CD4-positive, alpha-beta T cell (primary cell): ENCODE measurements at regions of chr3 and their contacts with region 1.

Region 1: DNA sequence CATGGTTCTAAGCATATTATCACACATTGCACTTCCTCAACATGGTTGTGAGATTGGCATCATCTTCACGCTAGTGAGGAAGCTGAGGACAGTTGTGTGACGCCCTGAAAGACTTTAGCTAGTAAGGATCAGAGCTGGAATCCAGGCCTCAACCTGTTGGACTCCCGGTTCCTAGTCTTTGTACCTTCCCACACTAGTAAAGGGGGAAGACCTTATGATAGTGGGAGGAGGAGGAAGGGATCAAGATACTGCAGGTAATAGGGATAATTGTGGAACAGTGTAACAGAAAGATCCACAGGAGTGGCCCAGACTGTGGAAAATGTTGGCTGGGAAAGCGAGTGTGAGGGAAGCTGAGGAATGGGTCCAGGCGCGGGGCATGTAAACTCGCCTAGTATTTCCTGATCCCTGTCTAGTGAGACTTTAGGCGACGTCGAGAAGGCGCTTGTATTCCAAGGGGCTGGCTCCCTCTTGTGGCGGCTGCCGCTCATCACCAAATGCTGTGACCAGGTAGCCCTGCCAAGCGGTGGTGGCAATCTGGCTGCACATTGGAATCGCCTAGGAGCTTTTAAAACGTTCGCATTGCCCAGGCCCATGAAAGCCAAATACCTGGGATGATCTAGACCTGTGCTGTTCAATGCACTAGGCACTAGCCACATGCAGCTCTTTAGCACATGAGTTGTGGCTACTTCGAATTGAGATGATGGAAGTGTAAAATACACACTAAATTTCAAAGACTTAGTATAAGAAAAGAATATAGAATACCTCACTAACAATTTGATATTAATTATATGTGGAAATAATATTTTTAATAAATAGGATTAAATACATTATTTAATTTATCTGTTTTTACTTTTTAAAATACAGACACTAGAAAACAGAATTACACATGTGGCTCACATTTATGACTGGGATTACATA is 38.8 kb upstream of the CLDN18 start:
- DNase-seq: peak in 13 of 14 experiments; percentile 14 to 55 (median 29)
- ATAC-seq: no peak
- H3K4me3 ChIP-seq: no peak overlapping the region
- H3K4me3 Mint-ChIP-seq: no peak overlapping the region
- H3K27ac ChIP-seq: no peak overlapping the region
- H3K27ac Mint-ChIP-seq: no peak overlapping the region
- H3K4me1 ChIP-seq: no peaks in the 10 kb centered on the region
- H3K4me1 Mint-ChIP-seq: no peaks in the 10 kb centered on the region
- H3K27me3 ChIP-seq: peaks cover 0 to 10% of the 10 kb centered on the region in 2 experiments
- H3K27me3 Mint-ChIP-seq: peaks cover 15% of the 10 kb centered on the region
- CTCF ChIP-seq: peak; percentile 65

Region 2: GRCh38 chr3:137105277-137105977 is 865.7 kb before region 1 on chr3:
- CTCF ChIA-PET with region 1: no interaction called
- POLR2A ChIA-PET with region 1: no interaction called
- intact Hi-C with region 1: loop called in 1 of 2 experiments (anchors 1 kb)
- DNase-seq: peak in 4 of 14 experiments; percentile 2 to 61 (median 48)
- ATAC-seq: no peak
- H3K4me3 ChIP-seq: no peak overlapping the region
- H3K4me3 Mint-ChIP-seq: no peak overlapping the region
- H3K27ac ChIP-seq: no peak overlapping the region
- H3K27ac Mint-ChIP-seq: no peak overlapping the region
- H3K4me1 ChIP-seq: no peaks in the 10 kb centered on the region
- H3K4me1 Mint-ChIP-seq: no peaks in the 10 kb centered on the region
- H3K27me3 ChIP-seq: peaks cover 3 to 10% of the 10 kb centered on the region in 2 experiments
- H3K27me3 Mint-ChIP-seq: peaks cover 29% of the 10 kb centered on the region
- CTCF ChIP-seq: peak; percentile 62

Region 3: GRCh38 chr3:137854533-137855280 is 116.5 kb before region 1 on chr3:
- CTCF ChIA-PET with region 1: no interaction called
- POLR2A ChIA-PET with region 1: no interaction called
- intact Hi-C with region 1: no loop called
- DNase-seq: no peak
- ATAC-seq: no peak
- H3K4me3 ChIP-seq: no peak overlapping the region
- H3K4me3 Mint-ChIP-seq: no peak overlapping the region
- H3K27ac ChIP-seq: no peak overlapping the region
- H3K27ac Mint-ChIP-seq: no peak overlapping the region
- H3K4me1 ChIP-seq: no peaks in the 10 kb centered on the region
- H3K4me1 Mint-ChIP-seq: no peaks in the 10 kb centered on the region
- H3K27me3 ChIP-seq: no peaks in the 10 kb centered on the region
- H3K27me3 Mint-ChIP-seq: peaks cover 21% of the 10 kb centered on the region
- CTCF ChIP-seq: no peak